OCI-LY7 (cell line): ENCODE measurements at regions of chr3 and their contacts with region 1.

Region 1: GRCh38 chr3:64224826-64225610 is at the start of gene PRICKLE2:
- DNase-seq: peak; percentile 92
- H3K4me3 ChIP-seq: peak within 1 kb of the TSS; percentile 75
- H3K27ac ChIP-seq: peak within 1 kb of the TSS; percentile 40
- H3K4me1 ChIP-seq: peaks cover 34% of the 10 kb centered on the region
- CTCF ChIP-seq: peak; percentile 67
- total RNA-seq, gene PRICKLE2: 1.3 and 2.0 TPM in 2 replicates

Region 2: GRCh38 chr3:63383040-63383439 is 842.0 kb before region 1 on chr3:
- CTCF ChIA-PET with region 1: no interaction called
- POLR2A ChIA-PET with region 1: no interaction called
- intact Hi-C with region 1: no loop called
- DNase-seq: no peak
- H3K4me3 ChIP-seq: no peak overlapping the region
- H3K27ac ChIP-seq: no peak overlapping the region
- H3K4me1 ChIP-seq: no peaks in the 10 kb centered on the region
- CTCF ChIP-seq: no peak

Region 3: GRCh38 chr3:64023187-64023848 is 201.7 kb before region 1 on chr3 and contains the start of gene PSMD6:
- CTCF ChIA-PET with region 1: no interaction called
- POLR2A ChIA-PET with region 1: interaction called, 7 read pairs
- intact Hi-C with region 1: loop called (anchors 2 kb)
- DNase-seq: peak; percentile 90
- H3K4me3 ChIP-seq: peak within 1 kb of the TSS; percentile 93
- H3K27ac ChIP-seq: peak within 1 kb of the TSS; percentile 50
- H3K4me1 ChIP-seq: peaks cover 22% of the 10 kb centered on the region
- CTCF ChIP-seq: peak; percentile 97
- total RNA-seq, gene PSMD6: 65.2 and 74.1 TPM in 2 replicates

Region 4: DNA sequence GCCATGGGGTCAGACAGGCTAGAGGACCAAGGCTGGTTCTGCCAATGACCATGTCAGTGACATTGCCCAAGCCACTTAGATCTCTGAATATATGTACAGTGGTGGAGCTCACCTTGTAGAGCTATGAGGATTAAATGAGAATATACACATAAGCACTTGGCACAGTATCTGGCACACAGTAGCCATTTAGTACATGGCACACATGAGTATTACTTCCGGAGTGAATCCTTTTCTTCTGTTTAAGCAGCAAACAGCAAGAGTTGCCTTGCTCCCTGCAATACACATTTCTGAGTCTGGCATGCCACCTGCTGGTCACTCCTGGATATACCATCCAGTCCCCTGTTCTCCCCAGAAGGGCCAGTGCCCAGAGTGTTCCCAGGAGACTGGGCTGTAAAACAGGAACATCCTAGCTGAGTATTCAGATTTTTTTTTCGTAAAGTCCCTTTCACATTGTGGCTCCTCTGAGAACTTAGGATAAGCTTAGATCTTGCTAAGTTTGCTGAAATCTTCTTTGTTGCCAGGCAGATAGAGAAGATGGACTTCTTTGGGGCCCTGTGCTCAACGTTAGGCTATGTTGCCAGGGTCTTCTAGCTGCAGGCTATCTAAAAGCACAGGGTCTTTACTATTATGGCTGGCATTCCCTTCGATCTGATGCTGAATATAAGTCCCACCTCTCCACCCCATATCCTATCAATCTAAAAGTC is 259.4 kb after region 1 on chr3:
- CTCF ChIA-PET with region 1: interaction called, 3 read pairs
- POLR2A ChIA-PET with region 1: no interaction called
- intact Hi-C with region 1: loop called (anchors 5 kb)
- DNase-seq: peak; percentile 72
- H3K4me3 ChIP-seq: no peak overlapping the region
- H3K27ac ChIP-seq: no peak overlapping the region
- H3K4me1 ChIP-seq: no peaks in the 10 kb centered on the region
- CTCF ChIP-seq: peak; percentile 88